Sigmoid colon (tissue), 7 donors: ENCODE measurements at regions of chr6 and their contacts with region 1.

Region 1: GRCh38 chr6:160992061-160992979 is 751 bp downstream of the MAP3K4 start:
- DNase-seq: peak; percentile 76
- H3K4me3 ChIP-seq: peak overlapping the region; percentile 71 to 99 (median 94)
- H3K27ac ChIP-seq: peak overlapping the region; percentile 91 to 96 (median 94)
- H3K4me1 ChIP-seq: peaks cover 0 to 28% (median 17%) of the 10 kb centered on the region in 4 donors
- H3K27me3 ChIP-seq: no peaks in the 10 kb centered on the region
- CTCF ChIP-seq: peak in 3 of 4 experiments; percentile 22 to 54 (median 42)
- EP300 ChIP-seq: no peak
- POLR2A ChIP-seq: no peak

Region 2: GRCh38 chr6:160930547-160931377 is 61.6 kb before region 1 on chr6:
- intact Hi-C with region 1: loop called (anchors 2 kb)
- DNase-seq: peak; percentile 89
- H3K4me3 ChIP-seq: peak overlapping the region; percentile 32 to 58 (median 52)
- H3K27ac ChIP-seq: peak overlapping the region in 3 of 4 donors; percentile 22 to 62 (median 41)
- H3K4me1 ChIP-seq: peaks cover 0 to 12% (median 8%) of the 10 kb centered on the region in 4 donors
- H3K27me3 ChIP-seq: peaks cover 0 to 8% (median 0%) of the 10 kb centered on the region in 3 donors
- CTCF ChIP-seq: peak; percentile 87 to 93 (median 89)
- EP300 ChIP-seq: peak in 2 of 4 donors; percentile 9 to 13
- POLR2A ChIP-seq: no peak

Region 3: DNA sequence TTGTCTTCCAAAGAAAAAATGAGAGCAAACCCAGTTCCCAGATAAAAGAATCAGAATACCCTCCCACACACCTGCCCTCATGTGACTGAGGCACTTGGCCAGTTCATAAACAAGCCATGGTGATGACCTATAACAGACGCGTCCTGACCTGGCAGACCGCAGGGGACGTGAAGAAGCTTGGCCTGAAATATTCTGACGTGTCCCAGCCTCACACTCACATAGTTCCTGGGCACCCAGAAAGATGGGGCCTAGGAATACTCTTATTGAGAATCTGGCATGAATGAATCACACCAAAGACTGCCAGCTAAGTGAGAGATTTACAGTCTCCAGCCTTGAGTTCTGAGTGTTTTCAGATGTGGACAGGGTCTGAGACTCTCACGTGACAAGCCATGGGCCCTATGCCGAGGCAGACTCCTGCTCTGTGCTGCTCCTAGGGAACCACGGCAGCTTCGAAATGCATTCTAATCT is 18.0 kb before region 1 on chr6:
- intact Hi-C with region 1: loop called (anchors 1 kb)
- DNase-seq: peak; percentile 93
- H3K4me3 ChIP-seq: no peak overlapping the region
- H3K27ac ChIP-seq: peak overlapping the region; percentile 42 to 75 (median 56)
- H3K4me1 ChIP-seq: peaks cover 0 to 35% (median 27%) of the 10 kb centered on the region in 4 donors
- H3K27me3 ChIP-seq: no peaks in the 10 kb centered on the region
- CTCF ChIP-seq: no peak
- EP300 ChIP-seq: no peak
- POLR2A ChIP-seq: no peak

Region 4: DNA sequence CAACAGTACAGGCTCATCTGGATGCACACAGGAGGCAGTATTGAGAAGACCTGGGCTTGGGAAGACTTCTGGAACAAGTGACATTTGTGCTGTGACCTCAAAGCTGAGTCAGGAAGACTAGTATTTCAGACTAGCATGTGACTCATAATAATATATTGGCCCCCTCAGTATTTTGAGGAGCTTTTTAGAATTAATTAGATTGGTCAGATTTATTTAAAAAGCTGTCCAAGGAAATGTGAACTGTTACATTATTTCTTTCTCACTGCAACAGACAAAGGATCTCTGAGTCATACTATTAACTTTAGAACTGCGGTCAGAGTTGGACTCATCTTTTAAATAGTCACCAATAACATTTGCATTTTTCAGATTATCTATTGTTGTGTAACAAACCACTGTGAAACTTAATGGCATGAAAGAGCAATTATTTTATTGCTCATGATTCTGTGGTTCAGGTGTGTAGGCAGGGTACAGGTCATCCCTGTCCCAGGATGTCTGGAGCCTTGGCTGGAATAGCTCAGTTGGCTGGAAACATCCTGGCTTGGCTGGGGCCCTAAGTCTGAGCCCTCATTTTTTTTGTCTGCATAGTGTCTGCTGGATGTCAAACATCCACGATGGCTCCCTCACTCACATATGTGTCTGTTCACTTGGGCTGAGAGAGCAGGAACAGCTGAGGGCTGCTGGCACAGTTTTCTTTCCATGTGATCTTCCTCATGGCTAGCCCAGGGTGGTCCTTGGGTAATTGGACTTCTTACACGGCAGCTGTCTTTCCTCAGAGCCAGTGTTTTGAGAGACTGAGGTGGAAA is 46.1 kb after region 1 on chr6:
- intact Hi-C with region 1: loop called (anchors 5 kb)
- DNase-seq: peak; percentile 90
- H3K4me3 ChIP-seq: no peak overlapping the region
- H3K27ac ChIP-seq: peak overlapping the region; percentile 35 to 82 (median 66)
- H3K4me1 ChIP-seq: peaks cover 0 to 21% (median 19%) of the 10 kb centered on the region in 4 donors
- H3K27me3 ChIP-seq: no peaks in the 10 kb centered on the region
- CTCF ChIP-seq: no peak
- EP300 ChIP-seq: peak in 3 of 4 donors; percentile 8 to 18 (median 8)
- POLR2A ChIP-seq: no peak

Region 5: GRCh38 chr6:161228921-161229591 is 236.7 kb after region 1 on chr6:
- intact Hi-C with region 1: loop called (anchors 10 kb)
- DNase-seq: no peak
- H3K4me3 ChIP-seq: peak overlapping the region in 3 of 4 donors; percentile 7 to 25 (median 19)
- H3K27ac ChIP-seq: peak overlapping the region; percentile 68 to 83 (median 78)
- H3K4me1 ChIP-seq: peaks cover 0 to 51% (median 45%) of the 10 kb centered on the region in 4 donors
- H3K27me3 ChIP-seq: no peaks in the 10 kb centered on the region
- CTCF ChIP-seq: no peak
- EP300 ChIP-seq: no peak
- POLR2A ChIP-seq: no peak

Region 6: GRCh38 chr6:161273752-161274487 is 281.6 kb after region 1 on chr6 and contains the start of gene AGPAT4:
- intact Hi-C with region 1: loop called (anchors 5 kb)
- DNase-seq: peak; percentile 90
- H3K4me3 ChIP-seq: peak within 1 kb of the TSS; percentile 55 to 77 (median 64)
- H3K27ac ChIP-seq: peak within 1 kb of the TSS; percentile 74 to 83 (median 78)
- H3K4me1 ChIP-seq: peaks cover 0 to 28% (median 20%) of the 10 kb centered on the region in 4 donors
- H3K27me3 ChIP-seq: no peaks in the 10 kb centered on the region
- CTCF ChIP-seq: no peak
- EP300 ChIP-seq: peak in 2 of 4 donors; percentile 15 to 24
- POLR2A ChIP-seq: peak; percentile 19 to 20
- total RNA-seq, gene AGPAT4: 6.9 to 16.6 (median 7.5) TPM

Region 7: DNA sequence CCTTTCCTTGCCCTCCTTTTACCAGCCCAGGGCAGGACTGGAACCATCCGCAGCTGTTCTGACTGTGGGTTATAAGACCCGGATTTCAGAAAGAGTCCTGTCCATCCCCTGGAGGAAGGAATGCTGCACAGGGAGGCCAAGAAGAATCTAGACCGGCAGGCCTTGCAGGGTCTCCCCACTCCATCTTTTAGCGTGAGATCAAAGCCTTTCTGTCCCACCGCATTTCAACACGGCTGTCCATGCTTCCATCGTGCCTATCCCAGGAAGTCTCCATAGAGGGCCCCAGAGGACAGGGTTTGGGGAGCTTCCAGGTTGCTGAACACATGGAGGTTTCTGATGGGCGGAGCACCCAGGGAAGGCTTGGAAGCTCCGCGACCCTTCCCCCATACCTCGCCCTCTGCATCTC is 360.9 kb after region 1 on chr6:
- intact Hi-C with region 1: no loop called
- DNase-seq: no peak
- H3K4me3 ChIP-seq: no peak overlapping the region
- H3K27ac ChIP-seq: no peak overlapping the region
- H3K4me1 ChIP-seq: no peaks in the 10 kb centered on the region
- H3K27me3 ChIP-seq: no peaks in the 10 kb centered on the region
- CTCF ChIP-seq: no peak
- EP300 ChIP-seq: no peak
- POLR2A ChIP-seq: no peak

Region 8: GRCh38 chr6:161370880-161371279 is 378.6 kb after region 1 on chr6:
- intact Hi-C with region 1: loop called (anchors 5 kb)
- DNase-seq: no peak
- H3K4me3 ChIP-seq: no peak overlapping the region
- H3K27ac ChIP-seq: no peak overlapping the region
- H3K4me1 ChIP-seq: peaks cover 0 to 6% (median 0%) of the 10 kb centered on the region in 4 donors
- H3K27me3 ChIP-seq: no peaks in the 10 kb centered on the region
- CTCF ChIP-seq: peak; percentile 67 to 81 (median 71)
- EP300 ChIP-seq: no peak
- POLR2A ChIP-seq: no peak